Left colon (tissue), 2 donors: ENCODE measurements at regions of chr6 and their contacts with region 1.

Region 1: GRCh38 chr6:106609699-106610098 is 19.6 kb downstream of the RTN4IP1 start:
- DNase-seq: peak in 1 of 2 donors; percentile 29
- ATAC-seq: peak; percentile 63

Region 2: DNA sequence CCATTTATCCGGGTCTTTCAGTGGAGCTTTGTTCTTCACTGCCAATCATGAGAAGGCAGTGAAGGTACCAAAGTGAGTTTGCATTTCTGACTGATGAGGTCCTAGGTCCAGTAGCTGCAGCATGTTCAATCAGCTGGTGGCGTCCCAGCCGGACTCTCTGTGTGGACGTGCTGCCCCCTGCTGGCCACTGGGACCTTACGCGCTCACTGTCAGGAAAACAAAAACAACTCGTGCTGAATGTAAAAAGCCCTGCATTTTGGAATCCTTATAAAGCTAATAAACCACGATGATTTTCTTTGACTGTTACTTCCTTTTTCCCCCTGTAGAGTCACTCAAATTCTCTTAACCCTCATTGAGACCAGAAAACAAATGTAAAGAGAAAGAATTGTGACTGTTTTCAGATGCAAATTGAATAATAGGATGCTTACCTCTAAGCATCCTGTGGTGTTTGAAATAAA is 369.8 kb after region 1 on chr6:
- intact Hi-C with region 1: loop called in 1 of 2 experiments (anchors 5 kb)
- DNase-seq: peak; percentile 73 to 93
- ATAC-seq: peak; percentile 28